ENCODE measurements at regions of chr12 and their contacts with region 1.

Region 1: GRCh38 chr12:119988782-119989668 is at the start of gene BICDL1:
- DNase-seq: peak; percentile 90
- H3K4me3 ChIP-seq: peak within 1 kb of the TSS; percentile 48 to 69
- H3K27ac ChIP-seq: peak within 1 kb of the TSS; percentile 76 to 86
- H3K4me1 ChIP-seq: no peaks in the 10 kb centered on the region
- H3K27me3 ChIP-seq: no peaks in the 10 kb centered on the region
- CTCF ChIP-seq: no peak
- POLR2A ChIP-seq: peak; percentile 47
- total RNA-seq, gene BICDL1: 8.6 to 34.0 TPM

Region 2: DNA sequence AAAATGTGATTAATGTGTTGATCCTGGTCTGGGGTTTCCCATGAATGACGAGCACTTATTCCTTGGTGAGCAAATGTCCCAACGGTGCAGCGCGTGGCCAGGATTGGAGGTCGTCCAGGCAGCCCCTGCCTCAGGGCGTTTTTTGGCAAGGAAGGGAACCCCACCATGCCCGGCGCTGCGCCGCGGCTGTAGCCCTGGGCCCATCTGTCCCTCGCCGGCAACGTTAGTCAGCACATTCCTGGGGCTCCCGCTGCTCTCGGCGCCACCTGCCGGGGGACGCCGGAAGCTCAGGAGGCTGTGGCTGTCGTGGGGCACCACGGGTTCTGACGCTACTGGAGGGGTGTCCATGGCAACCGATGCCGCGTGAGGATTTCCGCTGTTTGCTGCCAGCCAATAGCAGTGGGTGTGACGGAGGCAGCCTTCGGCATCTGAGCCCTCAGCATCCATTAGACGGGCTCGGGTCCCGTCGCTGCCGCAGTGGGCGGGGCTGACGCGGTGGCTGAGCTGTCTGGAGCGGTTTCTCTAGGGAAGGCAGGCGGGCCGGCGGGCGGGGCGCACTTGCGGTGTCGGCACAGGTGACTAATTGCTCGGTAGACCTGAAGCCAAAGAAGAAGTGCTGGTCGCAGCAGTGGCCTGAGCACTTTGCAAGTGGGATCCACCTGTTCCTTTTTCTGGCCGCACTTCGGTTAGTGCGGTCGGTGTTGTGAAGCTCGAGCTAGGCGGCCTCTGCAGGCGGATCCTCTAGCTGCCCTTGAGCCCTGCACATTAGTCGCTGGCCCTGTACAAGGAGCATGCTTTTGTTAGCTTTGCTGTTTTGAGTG is 98.0 kb after region 1 on chr12:
- intact Hi-C with region 1: loop called (anchors 10 kb)
- DNase-seq: peak; percentile 99
- H3K4me3 ChIP-seq: peak overlapping the region; percentile 10 to 22
- H3K27ac ChIP-seq: peak overlapping the region; percentile 51 to 70
- H3K4me1 ChIP-seq: peaks cover 3% of the 10 kb centered on the region
- H3K27me3 ChIP-seq: no peaks in the 10 kb centered on the region
- CTCF ChIP-seq: peak; percentile 91 to 100 (median 98)
- POLR2A ChIP-seq: peak; percentile 55

Region 3: GRCh38 chr12:120546050-120546386 is 557.0 kb after region 1 on chr12:
- intact Hi-C with region 1: no loop called
- DNase-seq: no peak
- H3K4me3 ChIP-seq: no peak overlapping the region
- H3K27ac ChIP-seq: peak overlapping the region in 1 of 2 donors; percentile 58
- H3K4me1 ChIP-seq: peaks cover 3% of the 10 kb centered on the region
- H3K27me3 ChIP-seq: no peaks in the 10 kb centered on the region
- CTCF ChIP-seq: no peak
- POLR2A ChIP-seq: no peak